Natural killer cell (primary cell): ENCODE measurements at regions of chr3 and their contacts with region 1.

Region 1: GRCh38 chr3:98573181-98573728 is 20.2 kb downstream of the CPOX start:
- DNase-seq: peak in 1 of 2 donors; percentile 66
- ATAC-seq: peak in 2 of 3 donors; percentile 52 to 53
- H3K4me3 ChIP-seq: no peak overlapping the region
- H3K4me3 Mint-ChIP-seq: no peak overlapping the region
- H3K27ac ChIP-seq: no peak overlapping the region
- H3K27ac Mint-ChIP-seq: peak overlapping the region; percentile 28 to 31
- H3K4me1 ChIP-seq: no peaks in the 10 kb centered on the region
- H3K4me1 Mint-ChIP-seq: peaks cover 18 to 19% of the 10 kb centered on the region in 2 donors
- H3K27me3 ChIP-seq: no peaks in the 10 kb centered on the region
- H3K27me3 Mint-ChIP-seq: no peaks in the 10 kb centered on the region
- CTCF ChIP-seq: peak; percentile 73

Region 2: GRCh38 chr3:98039322-98040024 is 533.8 kb before region 1 on chr3:
- intact Hi-C with region 1: loop called (anchors 1 kb)
- DNase-seq: peak; percentile 45 to 91
- ATAC-seq: peak; percentile 95 to 98 (median 98)
- H3K4me3 ChIP-seq: peak overlapping the region; percentile 9
- H3K4me3 Mint-ChIP-seq: peak overlapping the region; percentile 59
- H3K27ac ChIP-seq: peak overlapping the region; percentile 4
- H3K27ac Mint-ChIP-seq: peak overlapping the region; percentile 52 to 79
- H3K4me1 ChIP-seq: no peaks in the 10 kb centered on the region
- H3K4me1 Mint-ChIP-seq: peaks cover 7% of the 10 kb centered on the region in 2 donors
- H3K27me3 ChIP-seq: peaks cover 4% of the 10 kb centered on the region
- H3K27me3 Mint-ChIP-seq: peaks cover 3 to 28% of the 10 kb centered on the region in 2 donors
- CTCF ChIP-seq: peak; percentile 96

Region 3: GRCh38 chr3:98329392-98330124 is 243.7 kb before region 1 on chr3:
- intact Hi-C with region 1: loop called (anchors 1 kb)
- DNase-seq: peak in 1 of 2 donors; percentile 71
- ATAC-seq: peak; percentile 52 to 73 (median 60)
- H3K4me3 ChIP-seq: no peak overlapping the region
- H3K4me3 Mint-ChIP-seq: no peak overlapping the region
- H3K27ac ChIP-seq: no peak overlapping the region
- H3K27ac Mint-ChIP-seq: no peak overlapping the region
- H3K4me1 ChIP-seq: no peaks in the 10 kb centered on the region
- H3K4me1 Mint-ChIP-seq: no peaks in the 10 kb centered on the region
- H3K27me3 ChIP-seq: peaks cover 5% of the 10 kb centered on the region
- H3K27me3 Mint-ChIP-seq: peaks cover 23 to 30% of the 10 kb centered on the region in 2 donors
- CTCF ChIP-seq: peak; percentile 36

Region 4: DNA sequence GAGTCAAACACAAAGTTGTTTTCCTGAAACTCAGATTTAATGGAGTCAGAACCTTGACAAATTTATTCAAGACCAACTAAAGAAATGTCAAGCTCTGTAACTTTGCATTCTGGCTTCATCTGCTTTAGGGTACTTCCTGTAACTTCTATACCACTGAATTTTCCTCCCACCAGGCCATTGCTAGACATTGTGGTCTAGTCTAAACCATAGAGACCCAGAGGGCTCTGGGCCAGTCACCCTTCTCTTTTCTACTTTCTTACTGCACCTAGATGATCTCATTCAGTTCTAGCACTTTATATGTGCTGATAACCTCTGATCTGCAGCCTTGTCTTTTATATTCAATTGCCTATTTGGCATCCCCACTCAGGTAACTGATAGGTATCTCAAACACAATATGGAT is 113.0 kb before region 1 on chr3:
- intact Hi-C with region 1: no loop called
- DNase-seq: no peak
- ATAC-seq: peak in 1 of 3 donors; percentile 46
- H3K4me3 ChIP-seq: no peak overlapping the region
- H3K4me3 Mint-ChIP-seq: no peak overlapping the region
- H3K27ac ChIP-seq: no peak overlapping the region
- H3K27ac Mint-ChIP-seq: no peak overlapping the region
- H3K4me1 ChIP-seq: no peaks in the 10 kb centered on the region
- H3K4me1 Mint-ChIP-seq: peaks cover 0 to 5% of the 10 kb centered on the region in 2 donors
- H3K27me3 ChIP-seq: no peaks in the 10 kb centered on the region
- H3K27me3 Mint-ChIP-seq: no peaks in the 10 kb centered on the region
- CTCF ChIP-seq: no peak